Dorsolateral prefrontal cortex (tissue), 120 donors: ENCODE measurements at regions of chr17 and their contacts with region 1.

Region 1: DNA sequence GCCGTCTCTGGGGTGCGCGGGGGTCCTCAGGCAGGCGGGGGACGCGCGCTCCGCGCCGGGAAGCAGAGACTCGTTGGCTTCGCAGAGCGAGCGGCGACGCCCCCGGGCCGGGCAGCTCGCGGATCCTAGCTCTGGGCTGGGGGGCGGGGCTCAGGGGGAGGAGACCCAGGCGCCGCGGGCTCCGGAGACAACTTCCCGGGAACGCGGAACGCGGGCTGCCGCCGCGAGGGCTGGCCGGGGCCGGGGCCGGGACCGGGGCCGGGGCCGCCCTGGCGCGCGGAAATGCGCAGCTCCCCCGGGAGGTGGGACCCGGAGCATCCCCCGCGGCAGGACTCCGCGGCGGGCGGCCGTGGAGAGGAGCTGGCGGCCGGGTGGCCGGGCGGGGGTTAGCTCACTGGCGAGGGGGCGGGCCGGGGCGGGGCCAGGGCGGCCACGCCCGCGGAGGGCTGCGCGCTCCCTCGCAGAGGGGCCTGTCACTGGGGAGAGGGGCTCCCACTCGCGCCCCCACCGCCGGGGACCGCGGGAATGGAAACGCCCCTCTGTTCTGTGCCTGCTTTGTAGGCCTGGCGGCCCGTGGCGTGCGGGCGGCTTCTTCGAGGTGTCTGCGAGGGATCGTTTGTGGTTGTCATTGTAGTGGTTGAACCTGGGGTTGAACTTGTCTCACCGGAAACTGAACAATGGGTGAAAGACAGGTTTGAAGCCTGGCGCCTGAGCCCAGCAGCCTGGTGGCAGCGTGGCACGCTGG is at the start of gene GAS7:
- DNase-seq: peak in 6 of 10 donors; percentile 43 to 70 (median 57)
- H3K4me3 ChIP-seq: peak within 1 kb of the TSS; percentile 49 to 85 (median 73)
- H3K27ac ChIP-seq: peak within 1 kb of the TSS in 28 of 59 donors; percentile 5 to 75 (median 38)
- H3K27me3 ChIP-seq: peaks cover 0 to 8% (median 0%) of the 10 kb centered on the region in 45 donors
- CTCF ChIP-seq: peak in 4 of 56 donors; percentile 3 to 15 (median 12)
- total RNA-seq, gene GAS7: 226 to 644 (median 478) TPM

Region 2: GRCh38 chr17:10127819-10128425 is 70.8 kb before region 1 on chr17:
- intact Hi-C with region 1: loop called (anchors 2 to 5 kb)
- DNase-seq: peak in 8 of 10 donors; percentile 11 to 74 (median 52)
- H3K4me3 ChIP-seq: peak overlapping the region in 13 of 59 donors; percentile 6 to 33 (median 15)
- H3K27ac ChIP-seq: peak overlapping the region in 43 of 59 donors; percentile 5 to 76 (median 54)
- H3K27me3 ChIP-seq: no peaks in the 10 kb centered on the region
- CTCF ChIP-seq: peak in 5 of 56 donors; percentile 4 to 31 (median 15)